PC-9 (cell line): ENCODE measurements at regions of chr2 and their contacts with region 1.

Region 1: GRCh38 chr2:71510196-71510807 is 56.9 kb downstream of the DYSF start:
- DNase-seq: peak; percentile 50 to 65
- H3K4me3 ChIP-seq: no peak overlapping the region
- H3K27ac ChIP-seq: no peak overlapping the region
- H3K4me1 ChIP-seq: no peaks in the 10 kb centered on the region
- H3K27me3 ChIP-seq: no peaks in the 10 kb centered on the region
- CTCF ChIP-seq: peak; percentile 97

Region 2: DNA sequence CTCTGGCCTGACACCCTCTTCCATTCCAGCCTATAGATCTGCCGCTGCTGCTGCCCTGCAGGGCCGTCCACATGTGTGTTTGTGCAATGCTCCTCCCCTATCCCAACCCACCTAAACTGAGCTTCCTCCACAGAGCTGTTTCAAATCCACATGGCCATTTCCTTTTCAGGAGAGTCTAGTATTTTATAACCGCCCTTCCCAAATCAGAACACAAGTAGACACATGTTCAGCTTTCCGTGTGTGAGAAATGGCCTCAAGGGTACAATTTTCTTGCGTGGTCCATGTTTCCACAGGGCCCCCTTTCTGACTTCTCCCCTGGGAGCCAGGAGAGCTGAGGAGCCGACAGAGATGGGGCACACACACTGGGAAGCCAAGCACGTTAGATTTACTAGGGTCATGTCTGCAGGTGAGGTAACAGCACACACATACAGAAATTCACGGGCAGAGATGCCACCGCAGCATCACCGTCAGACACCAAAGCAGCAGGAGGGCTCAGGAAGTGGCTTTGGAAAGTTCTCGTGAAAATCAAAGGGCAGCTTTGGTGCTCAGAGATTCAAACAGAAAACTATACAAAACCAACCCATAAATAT is 853.8 kb before region 1 on chr2:
- CTCF ChIA-PET with region 1: no interaction called
- POLR2A ChIA-PET with region 1: no interaction called
- intact Hi-C with region 1: loop called (anchors 10 kb)
- DNase-seq: no peak
- H3K4me3 ChIP-seq: no peak overlapping the region
- H3K27ac ChIP-seq: no peak overlapping the region
- H3K4me1 ChIP-seq: no peaks in the 10 kb centered on the region
- H3K27me3 ChIP-seq: peaks cover 47% of the 10 kb centered on the region
- CTCF ChIP-seq: no peak

Region 3: DNA sequence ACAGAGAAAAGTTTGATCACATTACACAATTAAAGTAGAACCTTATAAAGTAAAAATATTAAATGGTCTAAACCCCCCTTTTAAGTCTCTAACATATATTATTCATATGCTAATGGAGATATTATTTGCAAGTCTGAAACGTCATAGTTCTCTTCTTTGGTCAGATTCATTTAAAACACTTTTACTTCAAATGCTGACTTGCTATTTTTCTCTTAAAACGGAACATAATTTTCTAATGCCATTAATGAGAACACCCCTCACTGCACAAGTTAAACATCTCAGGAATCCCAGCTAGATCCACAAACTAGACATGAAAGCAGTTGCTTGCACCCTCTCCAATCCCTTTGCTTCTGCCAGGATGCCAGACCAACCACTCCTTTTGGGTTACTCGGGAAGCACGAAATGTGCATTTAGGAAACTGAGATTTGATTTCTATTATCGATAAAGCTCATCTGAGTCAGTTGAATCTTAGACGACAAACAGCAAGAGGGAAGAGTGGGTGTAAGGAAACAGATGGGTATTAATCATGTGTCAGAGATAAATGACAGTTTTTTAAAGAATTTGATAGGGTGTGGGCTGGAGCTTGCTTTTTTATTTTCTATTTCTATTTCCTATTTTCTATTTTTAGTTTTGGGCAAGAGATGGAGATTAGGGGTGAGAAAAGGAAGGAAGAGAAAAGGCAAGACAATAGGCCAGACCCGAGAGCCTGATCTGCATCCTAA is 743.8 kb before region 1 on chr2:
- CTCF ChIA-PET with region 1: no interaction called
- POLR2A ChIA-PET with region 1: no interaction called
- intact Hi-C with region 1: no loop called
- DNase-seq: no peak
- H3K4me3 ChIP-seq: no peak overlapping the region
- H3K27ac ChIP-seq: no peak overlapping the region
- H3K4me1 ChIP-seq: no peaks in the 10 kb centered on the region
- H3K27me3 ChIP-seq: peaks cover 31% of the 10 kb centered on the region; the same call in 1 of the 2 replicates
- CTCF ChIP-seq: no peak

Region 4: GRCh38 chr2:71157124-71157793 is 353.0 kb before region 1 on chr2:
- CTCF ChIA-PET with region 1: no interaction called
- POLR2A ChIA-PET with region 1: no interaction called
- intact Hi-C with region 1: loop called (anchors 5 kb)
- DNase-seq: peak in 1 of 2 experiments; percentile 34
- H3K4me3 ChIP-seq: no peak overlapping the region
- H3K27ac ChIP-seq: no peak overlapping the region
- H3K4me1 ChIP-seq: no peaks in the 10 kb centered on the region
- H3K27me3 ChIP-seq: no peaks in the 10 kb centered on the region
- CTCF ChIP-seq: peak; percentile 75

Region 5: DNA sequence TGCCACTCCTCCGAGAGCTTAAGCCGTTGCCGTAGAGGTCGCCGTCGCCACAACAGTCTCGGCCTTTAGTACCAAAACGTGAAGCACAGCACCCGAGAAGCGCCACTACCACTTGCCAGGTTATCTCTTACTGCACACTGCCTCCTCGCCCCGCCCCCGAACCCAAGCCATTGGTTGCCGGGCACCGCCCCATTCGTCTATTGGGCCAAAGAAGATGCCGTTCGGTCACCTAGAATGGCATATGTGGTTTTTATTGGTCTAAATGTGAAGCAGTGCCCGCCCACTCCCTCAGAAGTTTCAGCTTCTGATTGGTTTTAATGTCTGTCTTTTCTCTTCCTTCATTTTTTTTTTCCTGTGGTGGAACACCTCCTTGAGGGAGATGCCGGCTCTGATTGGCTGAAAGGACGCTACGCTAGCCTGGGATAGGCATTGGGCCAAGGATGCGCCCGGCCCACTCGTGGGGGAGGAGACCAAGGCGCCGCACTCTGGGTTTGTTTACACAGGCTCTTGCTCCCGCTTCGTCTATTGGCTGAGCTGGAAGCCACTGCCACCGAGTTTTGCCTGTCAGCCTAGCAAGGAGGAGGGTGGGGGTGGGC is 283.2 kb before region 1 on chr2 and contains the start of gene PAIP2B:
- CTCF ChIA-PET with region 1: no interaction called
- POLR2A ChIA-PET with region 1: no interaction called
- intact Hi-C with region 1: loop called (anchors 1 kb)
- DNase-seq: peak; percentile 98 to 100
- H3K4me3 ChIP-seq: peak within 1 kb of the TSS; percentile 69
- H3K27ac ChIP-seq: no peak within 1 kb of the TSS
- H3K4me1 ChIP-seq: peaks cover 10% of the 10 kb centered on the region
- H3K27me3 ChIP-seq: no peaks in the 10 kb centered on the region
- CTCF ChIP-seq: 0 out of 2 replicates have a peak, but pooled peaks have one; percentile 2
- total RNA-seq, gene PAIP2B: 5.4 and 6.1 TPM in 2 replicates

Region 6: DNA sequence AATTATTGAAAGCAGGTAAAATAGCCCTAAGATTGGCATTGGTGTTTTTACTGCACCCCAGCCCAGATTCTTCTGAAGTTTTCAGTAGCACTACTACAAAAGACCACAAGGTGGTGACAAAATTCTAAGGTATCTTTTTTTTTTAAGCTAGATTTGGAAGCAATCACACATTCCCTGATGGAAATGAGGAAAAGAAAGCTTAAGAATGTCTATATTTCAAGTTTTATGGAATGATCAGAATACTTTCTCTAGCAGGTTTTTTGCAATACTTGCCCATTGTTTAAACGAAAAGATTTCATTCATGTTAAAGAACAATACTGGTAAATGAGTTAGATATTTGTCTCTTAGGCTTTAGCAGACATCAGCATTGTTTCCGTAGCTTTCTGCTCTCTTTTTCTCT is 210.8 kb before region 1 on chr2:
- CTCF ChIA-PET with region 1: interaction called, 18 read pairs
- POLR2A ChIA-PET with region 1: no interaction called
- intact Hi-C with region 1: loop called (anchors 1 kb)
- DNase-seq: no peak
- H3K4me3 ChIP-seq: no peak overlapping the region
- H3K27ac ChIP-seq: no peak overlapping the region
- H3K4me1 ChIP-seq: no peaks in the 10 kb centered on the region
- H3K27me3 ChIP-seq: no peaks in the 10 kb centered on the region
- CTCF ChIP-seq: peak; percentile 90

Region 7: DNA sequence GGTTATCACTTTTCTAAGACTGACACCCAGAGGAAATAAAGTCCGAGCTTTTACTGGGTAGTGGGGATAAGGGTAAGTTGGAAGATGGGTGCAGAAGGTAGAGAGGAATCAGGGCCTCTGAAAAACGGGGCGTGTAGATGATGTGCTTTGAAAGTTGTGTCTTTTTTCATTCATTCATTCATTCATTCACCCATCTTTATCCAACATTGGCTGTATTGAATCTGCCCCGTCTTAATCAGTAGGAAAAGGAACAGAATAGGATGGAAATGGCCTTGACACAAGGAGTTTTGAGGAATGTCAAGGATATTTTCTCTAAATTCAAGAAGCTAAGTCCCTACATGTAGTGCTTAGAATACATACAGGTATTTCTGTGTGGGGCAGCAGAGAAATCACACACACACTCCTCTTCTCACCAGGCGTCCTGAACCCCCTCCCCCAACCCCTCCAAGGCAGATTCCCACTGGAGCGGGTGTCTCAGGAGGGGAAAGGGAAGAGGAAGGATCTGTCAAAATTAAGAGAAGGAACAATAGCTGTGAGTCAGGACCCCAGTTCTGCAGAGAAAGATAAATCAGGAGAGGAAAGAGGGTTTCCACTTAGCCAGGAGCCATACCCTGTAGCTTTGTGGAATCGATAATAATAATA is 43.0 kb before region 1 on chr2:
- CTCF ChIA-PET with region 1: interaction called, 11 read pairs
- POLR2A ChIA-PET with region 1: no interaction called
- intact Hi-C with region 1: no loop called
- DNase-seq: peak in 1 of 2 experiments; percentile 18
- H3K4me3 ChIP-seq: peak overlapping the region; percentile 58
- H3K27ac ChIP-seq: no peak overlapping the region
- H3K4me1 ChIP-seq: peaks cover 19% of the 10 kb centered on the region
- H3K27me3 ChIP-seq: no peaks in the 10 kb centered on the region
- CTCF ChIP-seq: no peak

Region 8: GRCh38 chr2:71545572-71546274 is 35.4 kb after region 1 on chr2:
- CTCF ChIA-PET with region 1: no interaction called
- POLR2A ChIA-PET with region 1: no interaction called
- intact Hi-C with region 1: no loop called
- DNase-seq: peak; percentile 31 to 48
- H3K4me3 ChIP-seq: no peak overlapping the region
- H3K27ac ChIP-seq: no peak overlapping the region
- H3K4me1 ChIP-seq: no peaks in the 10 kb centered on the region
- H3K27me3 ChIP-seq: no peaks in the 10 kb centered on the region
- CTCF ChIP-seq: peak; percentile 87

Region 9: DNA sequence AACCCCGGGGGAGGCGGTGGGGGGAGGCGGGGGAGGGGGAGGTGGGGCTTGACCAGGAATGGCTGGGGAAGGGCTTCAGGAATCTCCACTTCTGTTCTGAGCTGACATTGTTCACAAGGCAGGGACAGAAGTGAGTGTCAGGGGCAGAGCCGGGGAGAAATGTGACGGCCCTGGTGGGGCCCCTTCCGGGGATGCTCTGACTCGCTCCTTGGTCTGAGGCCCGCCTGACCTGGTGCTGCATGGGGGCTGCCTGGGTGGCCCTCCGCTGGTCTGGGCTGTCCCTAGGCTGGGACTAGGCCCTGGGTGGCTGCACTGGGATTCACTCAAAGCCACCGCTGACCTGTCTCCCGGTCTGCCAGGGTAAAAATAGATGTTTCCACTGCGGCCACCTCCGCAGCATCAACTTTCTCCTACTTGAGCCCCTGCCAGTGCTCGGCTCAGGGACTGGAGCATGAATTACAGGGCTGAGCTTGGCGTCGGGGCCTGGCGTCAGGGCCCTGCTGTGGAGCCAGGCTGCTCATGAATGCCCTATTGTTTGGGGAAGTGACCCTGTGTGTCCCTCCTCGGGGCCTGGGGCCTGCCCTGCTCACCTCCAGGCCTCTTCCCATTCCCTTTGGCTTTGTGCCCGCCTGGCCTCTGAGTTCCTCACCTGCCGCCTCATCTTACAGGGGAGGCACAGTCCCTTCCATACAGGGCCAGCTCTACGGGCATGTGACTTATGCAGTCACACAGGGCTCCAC is 190.5 kb after region 1 on chr2:
- CTCF ChIA-PET with region 1: no interaction called
- POLR2A ChIA-PET with region 1: no interaction called
- intact Hi-C with region 1: no loop called
- DNase-seq: no peak
- H3K4me3 ChIP-seq: no peak overlapping the region
- H3K27ac ChIP-seq: no peak overlapping the region
- H3K4me1 ChIP-seq: 0 out of 2 replicates have a peak, but pooled peaks cover 11% of the 10 kb centered on the region
- H3K27me3 ChIP-seq: 0 out of 2 replicates have a peak, but pooled peaks cover 5% of the 10 kb centered on the region
- CTCF ChIP-seq: no peak